Heart left ventricle (tissue), 16 donors: ENCODE measurements at regions of chr10 and their contacts with region 1.

Region 1: GRCh38 chr10:78720091-78720490 is 348.7 kb upstream of the ZMIZ1 start:
- DNase-seq: no peak
- ATAC-seq: no peak
- H3K4me3 ChIP-seq: no peak overlapping the region
- H3K27ac ChIP-seq: no peak overlapping the region
- H3K4me1 ChIP-seq: peaks cover 0 to 22% (median 6%) of the 10 kb centered on the region in 12 donors
- H3K27me3 ChIP-seq: no peaks in the 10 kb centered on the region
- CTCF ChIP-seq: no peak
- POLR2A ChIP-seq: no peak

Region 2: GRCh38 chr10:78248651-78249464 is 471.2 kb before region 1 on chr10:
- intact Hi-C with region 1: loop called in 1 of 10 experiments (anchors 5 kb)
- DNase-seq: no peak
- ATAC-seq: no peak
- H3K4me3 ChIP-seq: no peak overlapping the region
- H3K27ac ChIP-seq: peak overlapping the region in 1 of 12 donors; percentile 33
- H3K4me1 ChIP-seq: peaks cover 0 to 26% (median 0%) of the 10 kb centered on the region in 12 donors
- H3K27me3 ChIP-seq: peaks cover 0 to 4% (median 0%) of the 10 kb centered on the region in 9 donors
- CTCF ChIP-seq: no peak
- POLR2A ChIP-seq: no peak

Region 3: DNA sequence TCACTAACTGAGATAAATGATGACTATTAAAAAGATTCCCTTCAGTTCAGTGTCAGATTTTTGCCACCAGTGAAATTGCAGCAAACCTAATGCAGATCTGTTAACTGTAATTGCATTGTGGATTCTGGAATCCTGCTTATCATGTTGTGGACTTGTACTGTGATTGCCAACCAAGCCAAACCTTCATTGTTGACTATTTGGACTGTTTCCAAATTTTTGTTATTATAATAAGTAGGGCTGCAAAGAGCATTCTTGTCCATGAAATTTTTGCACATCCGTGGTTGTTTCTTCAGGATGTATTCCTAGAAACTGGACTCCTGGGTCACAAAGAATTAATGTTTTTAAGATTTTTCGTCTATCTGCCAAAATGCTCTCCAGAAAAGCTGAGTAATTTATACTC is 67.0 kb after region 1 on chr10:
- intact Hi-C with region 1: no loop called
- DNase-seq: no peak
- ATAC-seq: peak in 1 of 4 donors; percentile 36
- H3K4me3 ChIP-seq: no peak overlapping the region
- H3K27ac ChIP-seq: no peak overlapping the region
- H3K4me1 ChIP-seq: peaks cover 0 to 27% (median 4%) of the 10 kb centered on the region in 12 donors
- H3K27me3 ChIP-seq: no peaks in the 10 kb centered on the region
- CTCF ChIP-seq: no peak
- POLR2A ChIP-seq: no peak

Region 4: DNA sequence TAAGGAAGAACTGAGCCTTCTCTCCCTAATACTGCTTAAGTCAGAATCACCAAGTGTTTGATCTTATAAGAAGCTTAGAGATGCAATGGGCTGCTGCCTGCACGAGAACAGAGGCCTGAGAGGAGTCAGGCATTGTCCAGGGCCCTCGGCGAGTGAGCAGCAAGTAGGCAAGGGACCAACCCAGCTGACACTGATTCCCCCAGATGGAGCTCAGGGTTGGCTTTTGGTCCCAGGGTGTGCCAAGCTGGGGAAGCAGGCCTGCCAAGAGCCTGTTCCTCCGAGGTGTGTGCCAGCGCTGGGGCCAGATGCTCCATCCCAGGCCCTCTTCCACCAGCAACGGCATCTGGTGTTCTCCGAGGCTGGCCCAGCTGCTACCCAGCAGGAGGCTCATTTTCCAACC is 126.7 kb after region 1 on chr10:
- intact Hi-C with region 1: no loop called
- DNase-seq: peak; percentile 53 to 68 (median 66)
- ATAC-seq: peak; percentile 88 to 95 (median 90)
- H3K4me3 ChIP-seq: no peak overlapping the region
- H3K27ac ChIP-seq: no peak overlapping the region
- H3K4me1 ChIP-seq: no peaks in the 10 kb centered on the region
- H3K27me3 ChIP-seq: no peaks in the 10 kb centered on the region
- CTCF ChIP-seq: no peak
- POLR2A ChIP-seq: no peak